ENCODE measurements at regions of chr10 and their contacts with region 1.

Region 1: DNA sequence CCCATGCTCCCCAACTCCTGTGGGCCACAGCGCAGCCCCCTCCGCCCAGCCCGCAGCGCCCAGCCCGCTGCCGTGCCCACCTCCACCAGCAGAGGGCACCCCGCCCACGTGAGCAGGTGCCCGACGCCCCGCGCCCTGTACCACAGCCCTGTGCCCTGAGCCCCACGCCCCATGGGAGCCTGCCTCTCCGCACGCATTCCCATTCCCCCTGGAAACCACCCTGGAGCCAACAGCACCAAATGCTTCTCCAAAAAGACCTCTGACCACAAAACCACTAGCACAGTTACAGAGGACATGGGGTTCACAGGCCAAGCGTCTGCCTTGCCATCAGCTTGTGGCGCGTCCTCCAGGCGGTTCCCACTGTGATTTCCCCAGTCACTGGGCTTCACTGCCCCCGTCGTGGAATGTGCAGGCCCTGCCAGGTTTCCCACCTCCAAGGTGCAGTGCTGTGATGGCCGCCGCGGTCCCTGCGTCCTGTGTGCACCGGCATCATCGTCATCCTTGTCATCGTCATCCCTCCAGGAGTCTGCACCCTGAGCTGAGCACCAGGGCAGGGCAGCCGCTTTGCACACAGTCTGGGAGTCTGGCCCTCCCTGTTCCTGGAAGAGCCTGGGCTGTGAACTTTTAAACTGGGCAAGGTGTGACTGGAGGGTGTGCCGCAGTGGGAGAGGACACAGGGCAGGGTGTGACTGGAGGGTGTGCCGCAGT is 61.7 kb downstream of the PWWP2B start:
- DNase-seq: no peak
- H3K4me3 ChIP-seq: no peak overlapping the region
- CTCF ChIP-seq: peak; percentile 97

Region 2: GRCh38 chr10:132470410-132471124 is 11.8 kb after region 1 on chr10:
- CTCF ChIA-PET with region 1: interaction called, 24 read pairs
- POLR2A ChIA-PET with region 1: no interaction called
- DNase-seq: no peak
- H3K4me3 ChIP-seq: no peak overlapping the region
- CTCF ChIP-seq: no peak

Region 3: DNA sequence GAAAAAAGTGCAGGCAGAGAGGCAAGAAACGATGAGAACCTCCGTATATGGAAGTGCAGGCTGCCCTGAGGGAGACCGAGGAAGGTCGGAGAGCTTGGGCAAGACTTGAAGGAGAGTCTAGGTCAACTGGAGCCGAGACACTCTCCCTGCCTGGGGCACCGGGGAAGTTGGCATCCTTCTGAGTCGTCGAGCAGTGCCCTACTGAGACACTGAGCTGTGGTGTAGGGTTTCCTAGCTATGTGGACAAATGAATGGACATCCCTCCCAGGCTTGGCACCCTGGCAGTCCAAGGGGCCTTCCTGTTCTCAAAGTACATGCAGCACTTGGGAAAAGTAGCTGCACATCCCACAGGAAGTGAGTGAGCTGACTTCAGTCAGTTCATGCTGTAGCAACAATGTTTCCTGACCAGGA is 21.6 kb after region 1 on chr10:
- CTCF ChIA-PET with region 1: interaction called, 10 read pairs
- POLR2A ChIA-PET with region 1: no interaction called
- DNase-seq: no peak
- H3K4me3 ChIP-seq: no peak overlapping the region
- CTCF ChIP-seq: no peak

Region 4: DNA sequence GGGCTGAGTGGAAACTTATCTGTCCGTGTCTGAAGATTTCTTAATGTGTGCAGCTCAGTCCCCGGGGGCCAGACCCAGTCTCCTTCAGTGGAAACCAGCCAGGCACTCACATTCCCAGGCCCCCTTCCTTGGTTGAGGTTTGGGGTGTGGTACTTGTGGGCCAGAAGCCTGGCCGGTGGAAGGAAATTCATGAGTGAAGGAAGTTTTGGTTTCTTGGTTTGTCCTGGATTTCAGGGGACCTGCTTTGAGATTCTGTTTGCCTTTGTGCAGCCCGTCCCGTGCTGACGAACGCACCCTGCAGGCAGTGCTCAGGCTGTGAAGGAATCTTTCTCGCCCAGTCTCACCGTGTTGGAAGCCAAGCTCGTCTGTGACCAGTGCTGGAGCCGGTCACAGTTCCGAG is 81.7 kb after region 1 on chr10:
- CTCF ChIA-PET with region 1: interaction called, 18 read pairs
- POLR2A ChIA-PET with region 1: no interaction called
- DNase-seq: no peak
- H3K4me3 ChIP-seq: peak overlapping the region; percentile 38
- CTCF ChIP-seq: peak; percentile 43

Region 5: GRCh38 chr10:132637477-132638129 is 178.9 kb after region 1 on chr10:
- CTCF ChIA-PET with region 1: interaction called, 151 read pairs
- POLR2A ChIA-PET with region 1: no interaction called
- DNase-seq: no peak
- H3K4me3 ChIP-seq: no peak overlapping the region
- CTCF ChIP-seq: peak; percentile 54

Region 6: GRCh38 chr10:132700156-132701098 is 241.7 kb after region 1 on chr10:
- CTCF ChIA-PET with region 1: no interaction called
- POLR2A ChIA-PET with region 1: no interaction called
- DNase-seq: no peak
- H3K4me3 ChIP-seq: no peak overlapping the region
- CTCF ChIP-seq: no peak